ENCODE measurements at regions of chr19 and their contacts with region 1.

Region 1: DNA sequence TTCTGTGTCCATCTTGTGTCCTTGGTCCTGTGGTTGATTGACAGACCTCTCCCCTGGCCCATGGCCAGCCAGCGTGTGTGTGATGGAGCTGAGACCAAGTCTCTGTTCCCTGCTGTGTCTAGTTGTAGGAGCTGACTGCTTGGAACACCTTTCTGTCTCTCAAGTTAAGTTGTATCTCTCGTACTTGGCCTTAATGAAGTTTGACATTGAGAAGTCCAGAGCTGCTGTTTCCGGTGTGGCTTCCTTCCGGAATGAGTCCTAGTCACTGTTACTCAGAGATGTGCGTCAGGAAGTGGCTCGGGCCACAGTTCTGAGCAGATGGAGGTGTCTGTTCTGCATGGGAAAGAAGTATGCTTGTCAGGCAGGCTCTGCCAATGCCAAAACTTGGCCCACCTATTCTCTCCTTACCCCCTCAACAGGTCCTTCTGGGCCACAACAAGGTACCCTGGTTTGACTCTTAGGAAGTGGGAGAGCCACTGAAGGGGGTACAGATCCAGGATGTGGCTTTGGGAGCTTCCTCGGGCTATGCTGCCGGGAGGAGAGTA is 54.3 kb downstream of the GATAD2A start:
- DNase-seq: peak; percentile 86
- H3K4me3 Mint-ChIP-seq: peak overlapping the region; percentile 72
- H3K27ac Mint-ChIP-seq: peak overlapping the region; percentile 93
- H3K4me1 Mint-ChIP-seq: peaks cover 79% of the 10 kb centered on the region
- H3K27me3 Mint-ChIP-seq: no peaks in the 10 kb centered on the region

Region 2: GRCh38 chr19:19385108-19385899 is 74.5 kb before region 1 on chr19:
- CTCF ChIA-PET with region 1: no interaction called
- POLR2A ChIA-PET with region 1: interaction called, 4 read pairs
- intact Hi-C with region 1: loop called (anchors 1 kb)
- DNase-seq: peak; percentile 100
- H3K4me3 Mint-ChIP-seq: peak overlapping the region; percentile 80
- H3K27ac Mint-ChIP-seq: peak overlapping the region; percentile 85
- H3K4me1 Mint-ChIP-seq: peaks cover 35% of the 10 kb centered on the region
- H3K27me3 Mint-ChIP-seq: no peaks in the 10 kb centered on the region

Region 3: DNA sequence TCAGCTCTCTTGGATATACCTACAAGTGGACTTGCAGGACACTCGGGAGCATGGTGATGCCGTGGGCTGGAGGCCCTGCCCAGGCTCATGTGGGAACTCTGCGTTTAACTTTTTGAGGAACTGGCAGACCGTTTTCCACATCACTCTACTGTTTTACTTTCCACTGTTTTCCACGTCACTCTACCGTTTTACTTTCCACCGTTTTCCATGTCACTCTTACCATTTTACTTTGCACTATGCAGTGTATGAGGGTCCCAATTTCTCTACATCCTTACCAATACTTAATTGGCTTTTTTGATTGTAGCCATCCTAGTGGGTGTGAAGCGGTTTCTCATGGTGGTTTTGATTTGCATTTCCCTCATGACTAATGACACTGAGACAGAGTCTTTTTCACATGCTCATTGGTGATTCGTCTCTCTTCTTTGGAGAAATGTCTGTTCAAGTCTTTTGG is 13.8 kb before region 1 on chr19:
- CTCF ChIA-PET with region 1: no interaction called
- POLR2A ChIA-PET with region 1: interaction called, 4 read pairs
- intact Hi-C with region 1: loop called (anchors 1 kb)
- DNase-seq: peak; percentile 39
- H3K4me3 Mint-ChIP-seq: peak overlapping the region; percentile 51
- H3K27ac Mint-ChIP-seq: peak overlapping the region; percentile 82
- H3K4me1 Mint-ChIP-seq: peaks cover 71% of the 10 kb centered on the region
- H3K27me3 Mint-ChIP-seq: no peaks in the 10 kb centered on the region

Region 4: DNA sequence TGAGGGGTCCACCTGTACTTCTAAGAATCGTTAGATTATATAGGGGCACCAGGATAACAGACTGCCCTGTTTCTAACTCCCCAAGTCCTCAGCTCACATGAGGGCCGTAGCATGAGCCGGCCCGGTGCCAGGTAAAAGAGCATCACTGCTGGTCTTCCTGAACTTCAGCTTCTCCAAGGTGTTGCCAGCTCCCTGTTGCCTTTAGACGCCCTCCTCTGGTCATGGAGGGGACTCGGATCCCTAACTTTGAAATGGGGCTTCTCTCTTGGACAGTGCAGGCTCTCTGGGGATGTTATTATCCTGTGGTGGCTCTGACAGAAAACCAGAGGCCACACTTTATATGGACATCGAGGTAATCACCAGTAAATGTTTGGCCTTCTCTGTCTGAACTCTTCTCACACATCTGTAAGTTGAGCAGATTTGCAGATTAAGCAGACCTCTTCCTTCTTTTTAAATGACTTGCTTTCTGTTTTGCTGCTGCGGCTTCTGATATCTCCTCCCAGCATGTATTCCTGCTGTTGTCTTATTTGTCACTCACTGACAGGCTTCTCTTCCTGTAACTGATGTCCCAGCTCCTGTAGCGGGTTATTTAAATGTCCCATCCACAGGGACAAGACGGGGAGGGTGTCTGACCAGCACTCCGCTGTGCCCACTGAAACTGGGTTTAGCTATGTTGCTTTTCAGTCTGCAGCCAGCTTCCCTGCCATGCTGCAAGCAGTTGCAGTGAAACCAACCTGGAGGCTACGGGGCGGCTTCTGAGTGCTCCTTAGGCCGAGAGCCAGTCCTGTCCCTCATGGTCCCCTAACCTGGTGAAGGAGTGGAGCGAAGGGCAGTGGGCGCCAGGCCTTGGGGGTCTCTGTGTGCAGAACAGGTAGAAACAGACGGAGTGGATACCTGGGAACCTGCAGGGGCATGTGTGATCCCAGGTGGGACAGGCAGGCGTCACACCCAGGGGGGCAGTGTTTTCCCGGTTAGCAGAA is 16.4 kb after region 1 on chr19:
- CTCF ChIA-PET with region 1: interaction called, 5 read pairs
- POLR2A ChIA-PET with region 1: no interaction called
- intact Hi-C with region 1: loop called (anchors 2 kb)
- DNase-seq: no peak
- H3K4me3 Mint-ChIP-seq: no peak overlapping the region
- H3K27ac Mint-ChIP-seq: peak overlapping the region; percentile 61
- H3K4me1 Mint-ChIP-seq: peaks cover 86% of the 10 kb centered on the region
- H3K27me3 Mint-ChIP-seq: no peaks in the 10 kb centered on the region

Region 5: DNA sequence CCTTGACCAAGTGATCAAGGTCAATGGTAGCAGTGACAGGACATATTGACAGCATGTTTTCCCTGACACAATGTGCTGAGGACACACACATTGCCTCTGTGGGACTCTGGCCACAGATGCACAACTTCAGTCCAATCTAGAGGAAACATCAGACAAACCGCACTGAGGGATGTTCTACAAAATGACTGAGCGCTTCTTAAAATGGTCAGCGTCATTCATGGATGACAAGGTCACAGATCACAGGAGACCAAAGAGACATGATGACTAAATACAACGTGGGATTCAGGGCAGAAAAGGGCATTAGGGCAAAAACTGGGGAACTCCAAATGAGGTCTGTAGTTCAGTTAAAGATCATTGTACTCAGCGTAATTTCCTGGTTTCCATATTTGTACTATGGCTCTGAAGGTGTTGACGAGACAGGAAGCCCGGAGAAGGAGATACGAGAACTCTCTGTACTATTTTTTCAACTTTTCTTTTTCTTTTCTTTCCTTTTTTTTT is 138.1 kb after region 1 on chr19:
- CTCF ChIA-PET with region 1: no interaction called
- POLR2A ChIA-PET with region 1: no interaction called
- intact Hi-C with region 1: loop called (anchors 5 kb)
- DNase-seq: peak; percentile 74
- H3K4me3 Mint-ChIP-seq: peak overlapping the region; percentile 75
- H3K27ac Mint-ChIP-seq: peak overlapping the region; percentile 100
- H3K4me1 Mint-ChIP-seq: peaks cover 81% of the 10 kb centered on the region
- H3K27me3 Mint-ChIP-seq: no peaks in the 10 kb centered on the region

Measured in activated CD4-positive, alpha-beta memory T cell treated with anti-CD3 and anti-CD28 coated beads for 36 hours (primary cell).